ENCODE measurements at regions of chr18 and their contacts with region 1.

Region 1: GRCh38 chr18:44130376-44130942 is 550.2 kb upstream of the SETBP1 start:
- DNase-seq: peak; percentile 27
- H3K4me3 ChIP-seq: no peak overlapping the region
- H3K27ac ChIP-seq: no peak overlapping the region
- H3K4me1 ChIP-seq: no peaks in the 10 kb centered on the region
- H3K27me3 ChIP-seq: no peaks in the 10 kb centered on the region
- CTCF ChIP-seq: peak; percentile 53

Region 2: DNA sequence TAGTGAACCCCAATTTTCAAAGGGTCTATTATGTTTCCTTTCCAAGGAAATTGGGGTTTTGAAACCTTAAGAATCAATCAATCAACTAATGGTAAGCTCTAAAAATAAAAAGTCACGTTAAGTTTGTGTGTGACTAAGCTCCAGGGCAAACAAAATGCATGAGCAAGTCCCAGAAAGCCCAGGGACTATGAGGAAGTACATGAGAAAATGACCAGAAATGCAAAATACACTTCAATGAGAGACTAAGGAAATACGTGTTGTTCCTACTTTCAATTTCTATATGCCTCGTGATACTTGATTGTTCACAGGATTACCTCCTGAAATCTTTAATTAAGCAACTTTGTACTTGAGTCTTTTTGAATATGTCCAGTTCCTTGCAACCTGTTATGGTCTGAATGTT is 168.7 kb before region 1 on chr18:
- intact Hi-C with region 1: no loop called
- DNase-seq: no peak
- H3K4me3 ChIP-seq: no peak overlapping the region
- H3K27ac ChIP-seq: no peak overlapping the region
- H3K4me1 ChIP-seq: no peaks in the 10 kb centered on the region
- H3K27me3 ChIP-seq: no peaks in the 10 kb centered on the region
- CTCF ChIP-seq: no peak

Region 3: DNA sequence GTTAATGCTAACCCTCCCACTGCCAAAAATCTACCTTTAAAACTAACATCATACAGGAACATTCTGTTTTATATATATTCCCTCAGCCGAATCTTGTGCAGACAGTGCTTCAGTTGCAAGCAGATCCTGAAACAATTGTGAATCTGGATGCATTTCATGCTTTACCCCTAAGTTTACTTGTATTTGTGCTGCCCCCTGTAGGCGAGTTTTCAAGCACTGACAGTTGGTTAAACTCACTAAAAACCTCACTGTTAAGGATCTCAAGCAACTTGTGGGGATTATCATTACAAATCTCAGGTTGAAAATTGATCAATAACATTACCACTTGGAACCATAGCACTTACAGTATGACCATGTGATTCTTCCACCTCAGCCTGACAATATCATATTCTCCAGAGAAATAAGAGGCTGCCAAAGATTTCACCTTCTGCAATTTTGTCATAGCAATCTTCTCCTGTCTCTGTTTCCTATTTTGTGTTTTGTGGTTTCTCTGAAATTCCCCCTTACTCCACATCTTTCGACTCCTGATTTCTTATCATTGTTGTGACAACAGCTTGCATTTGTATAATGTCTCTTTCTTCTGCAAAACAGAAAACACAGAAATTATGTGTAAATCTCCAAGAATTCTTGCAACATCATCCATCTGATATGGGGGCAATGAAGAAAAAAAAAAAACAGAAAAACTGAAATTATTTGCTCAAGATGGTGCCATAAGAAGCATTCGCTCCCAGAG is 195.6 kb after region 1 on chr18:
- intact Hi-C with region 1: loop called (anchors 10 kb)
- DNase-seq: peak; percentile 75
- H3K4me3 ChIP-seq: no peak overlapping the region
- H3K27ac ChIP-seq: no peak overlapping the region
- H3K4me1 ChIP-seq: no peaks in the 10 kb centered on the region
- H3K27me3 ChIP-seq: no peaks in the 10 kb centered on the region
- CTCF ChIP-seq: peak; percentile 21

Region 4: GRCh38 chr18:44452346-44452745 is 321.9 kb after region 1 on chr18:
- intact Hi-C with region 1: no loop called
- DNase-seq: no peak
- H3K4me3 ChIP-seq: no peak overlapping the region
- H3K27ac ChIP-seq: no peak overlapping the region
- H3K4me1 ChIP-seq: no peaks in the 10 kb centered on the region
- H3K27me3 ChIP-seq: no peaks in the 10 kb centered on the region
- CTCF ChIP-seq: no peak

Measured in colonic mucosa (tissue), 4 donors.